SK-N-SH (cell line): ENCODE measurements at regions of chr6 and their contacts with region 1.

Region 1: DNA sequence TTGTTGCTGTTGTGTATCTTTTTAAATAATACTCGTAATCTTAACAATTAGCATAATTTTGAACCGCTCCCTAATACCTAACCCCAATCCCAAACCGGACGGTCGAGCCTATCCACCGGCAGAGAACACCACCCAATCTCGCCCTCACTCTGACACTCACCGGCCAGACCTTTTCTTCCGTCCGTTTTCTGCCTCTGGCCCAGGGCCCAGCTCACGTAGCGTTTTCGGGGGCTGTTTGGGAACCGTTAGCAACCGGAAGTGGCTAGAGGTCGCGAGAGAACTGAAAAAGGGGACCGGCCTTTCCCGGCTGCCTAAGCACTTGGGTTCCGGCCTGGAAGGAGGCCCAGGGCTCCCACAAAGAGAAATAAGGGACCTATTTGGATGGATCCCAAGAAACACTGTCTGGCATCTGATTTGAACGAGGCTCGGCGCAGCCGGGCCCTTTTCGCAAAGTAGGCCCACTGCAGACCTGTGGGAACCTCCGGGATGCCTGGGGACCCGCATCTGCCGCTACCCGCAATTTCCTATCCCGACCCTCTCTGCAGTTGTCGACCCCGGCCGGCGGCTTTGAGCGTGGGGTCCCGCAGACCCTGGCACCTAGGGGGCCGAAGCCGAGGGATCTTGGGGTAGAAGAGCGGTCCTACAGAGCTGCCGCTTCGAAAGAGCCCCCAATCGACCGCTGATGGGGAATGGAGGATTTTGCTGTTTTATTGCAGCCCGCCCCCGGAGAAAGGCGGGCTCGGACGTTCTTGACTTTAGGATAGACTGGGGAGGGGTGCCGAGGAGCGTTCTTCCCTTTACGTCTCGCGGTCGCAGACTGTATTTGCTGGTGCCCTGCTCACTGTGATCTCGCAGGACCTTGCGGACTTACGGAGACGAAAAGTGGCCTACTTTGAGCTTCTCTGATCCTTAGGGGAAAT is 4.8 kb upstream of the ZKSCAN8 start:
- DNase-seq: peak; percentile 79
- H3K4me3 ChIP-seq: peak overlapping the region; percentile 86 to 90
- H3K27ac ChIP-seq: peak overlapping the region; percentile 88 to 97
- H3K4me1 ChIP-seq: peaks cover 0 to 17% of the 10 kb centered on the region in 2 experiments; a peak in 3 of 4 replicates
- H3K27me3 ChIP-seq: no peaks in the 10 kb centered on the region
- CTCF ChIP-seq: no peak
- EP300 ChIP-seq: peak in 1 of 2 experiments; percentile 50; a peak in 1 of 4 replicates
- RAD21 ChIP-seq: no peak

Region 2: DNA sequence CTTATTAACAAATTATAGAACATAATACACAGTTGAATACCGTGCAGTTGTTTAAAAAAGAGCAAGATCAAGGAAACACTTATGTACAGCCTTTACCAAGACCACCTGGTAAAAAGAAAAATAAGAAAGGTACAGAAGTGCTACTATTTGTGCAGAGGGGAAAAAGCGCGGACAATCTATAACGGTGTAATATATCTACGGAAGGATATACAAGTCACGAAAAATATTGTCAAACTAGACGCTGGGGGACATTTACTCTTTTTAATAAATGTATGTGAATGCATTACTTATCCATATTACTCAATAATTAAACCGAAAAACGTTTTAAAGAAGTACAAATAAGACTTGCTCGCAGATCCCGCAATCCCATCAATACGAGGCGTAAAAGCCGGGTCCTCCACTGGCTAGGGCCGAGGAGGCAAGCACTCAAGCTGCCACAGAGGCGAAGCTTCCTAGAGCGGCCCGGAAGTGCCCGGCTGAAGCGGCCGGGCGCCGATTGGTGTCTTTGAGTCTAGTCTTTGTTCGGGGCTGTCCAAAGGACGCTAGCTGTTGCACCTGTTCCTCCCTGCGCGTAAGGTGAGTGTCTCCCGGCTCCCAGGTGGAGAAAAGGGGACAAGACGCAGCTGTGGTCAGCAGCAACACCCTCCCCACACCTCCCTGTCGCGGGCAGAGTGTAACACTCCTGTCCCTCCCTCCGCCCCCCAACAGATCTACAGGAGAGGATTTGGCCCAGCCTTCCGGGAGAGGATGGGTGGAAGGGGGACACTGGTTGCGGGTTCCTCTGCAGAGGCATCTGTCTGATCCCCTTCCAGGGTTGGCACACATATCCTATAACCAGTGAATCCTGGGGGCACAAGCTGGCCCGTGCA is 12.5 kb before region 1 on chr6 and contains the start of gene ZSCAN16:
- CTCF ChIA-PET with region 1: interaction called, 11 read pairs
- POLR2A ChIA-PET with region 1: interaction called, 23 read pairs
- DNase-seq: peak; percentile 81
- H3K4me3 ChIP-seq: peak within 1 kb of the TSS; percentile 83 to 91
- H3K27ac ChIP-seq: peak within 1 kb of the TSS; percentile 36 to 78; a peak in 3 of 4 replicates
- H3K4me1 ChIP-seq: peaks cover 6 to 10% of the 10 kb centered on the region in 2 experiments; a peak in 2 of 4 replicates
- H3K27me3 ChIP-seq: no peaks in the 10 kb centered on the region
- CTCF ChIP-seq: no peak
- EP300 ChIP-seq: no peak
- RAD21 ChIP-seq: no peak
- polyA plus RNA-seq, gene ZSCAN16: 3.7 and 6.2 TPM in 2 replicates

Region 3: DNA sequence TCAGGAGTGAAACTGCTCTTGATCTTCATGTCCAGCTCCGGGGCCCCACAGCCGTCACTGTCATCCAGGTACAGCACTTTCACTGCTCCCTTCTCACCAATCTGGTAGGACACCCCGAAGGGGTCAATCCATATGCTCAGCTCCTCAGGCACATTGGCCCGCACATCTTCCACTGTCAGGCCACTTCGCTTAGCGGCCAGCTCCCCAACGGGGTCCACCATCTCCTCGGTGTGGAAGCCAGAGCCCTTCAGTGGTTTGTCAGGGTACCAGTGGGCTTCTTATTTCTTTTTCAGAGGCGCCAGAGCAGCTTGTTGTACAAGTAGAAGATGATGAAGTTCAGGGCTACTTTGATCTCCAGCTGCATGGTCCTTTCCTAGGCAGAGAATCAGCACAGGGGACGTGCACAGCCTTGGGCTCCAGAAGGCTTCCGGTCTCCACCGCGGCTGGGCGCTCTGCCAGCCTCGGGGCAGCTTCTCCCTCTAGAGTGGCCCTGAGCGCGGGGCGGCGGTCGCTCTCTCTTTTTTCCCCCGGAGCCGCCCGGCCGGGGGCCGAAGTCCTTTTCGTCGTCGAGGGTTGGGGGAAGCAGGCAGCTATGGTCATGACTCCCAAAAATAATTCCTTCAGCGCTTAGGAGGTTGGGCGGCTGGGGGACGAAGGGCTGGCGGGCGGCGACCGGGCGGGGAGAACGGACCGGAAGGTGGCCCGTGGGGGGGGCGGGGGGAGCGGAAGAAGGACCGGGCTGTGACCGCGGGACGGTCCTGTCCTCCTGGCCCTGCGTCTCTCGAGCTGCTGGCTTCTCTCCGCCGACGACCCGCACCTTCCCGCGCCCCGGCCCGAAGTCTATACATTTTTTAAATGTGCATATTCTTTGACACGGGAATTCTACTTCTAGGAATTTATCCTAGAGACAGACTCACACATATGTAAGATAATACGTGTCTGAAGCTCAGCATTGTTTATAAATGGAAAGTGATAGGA is 81.7 kb after region 1 on chr6:
- CTCF ChIA-PET with region 1: no interaction called
- POLR2A ChIA-PET with region 1: interaction called, 13 read pairs
- DNase-seq: peak; percentile 93
- H3K4me3 ChIP-seq: peak overlapping the region; percentile 55 to 67
- H3K27ac ChIP-seq: peak overlapping the region in 1 of 2 experiments; percentile 81; a peak in 2 of 4 replicates
- H3K4me1 ChIP-seq: peaks cover 0 to 11% of the 10 kb centered on the region in 2 experiments; a peak in 2 of 4 replicates
- H3K27me3 ChIP-seq: no peaks in the 10 kb centered on the region; the same call in 1 of the 2 replicates
- CTCF ChIP-seq: no peak
- EP300 ChIP-seq: no peak
- RAD21 ChIP-seq: no peak

Region 4: DNA sequence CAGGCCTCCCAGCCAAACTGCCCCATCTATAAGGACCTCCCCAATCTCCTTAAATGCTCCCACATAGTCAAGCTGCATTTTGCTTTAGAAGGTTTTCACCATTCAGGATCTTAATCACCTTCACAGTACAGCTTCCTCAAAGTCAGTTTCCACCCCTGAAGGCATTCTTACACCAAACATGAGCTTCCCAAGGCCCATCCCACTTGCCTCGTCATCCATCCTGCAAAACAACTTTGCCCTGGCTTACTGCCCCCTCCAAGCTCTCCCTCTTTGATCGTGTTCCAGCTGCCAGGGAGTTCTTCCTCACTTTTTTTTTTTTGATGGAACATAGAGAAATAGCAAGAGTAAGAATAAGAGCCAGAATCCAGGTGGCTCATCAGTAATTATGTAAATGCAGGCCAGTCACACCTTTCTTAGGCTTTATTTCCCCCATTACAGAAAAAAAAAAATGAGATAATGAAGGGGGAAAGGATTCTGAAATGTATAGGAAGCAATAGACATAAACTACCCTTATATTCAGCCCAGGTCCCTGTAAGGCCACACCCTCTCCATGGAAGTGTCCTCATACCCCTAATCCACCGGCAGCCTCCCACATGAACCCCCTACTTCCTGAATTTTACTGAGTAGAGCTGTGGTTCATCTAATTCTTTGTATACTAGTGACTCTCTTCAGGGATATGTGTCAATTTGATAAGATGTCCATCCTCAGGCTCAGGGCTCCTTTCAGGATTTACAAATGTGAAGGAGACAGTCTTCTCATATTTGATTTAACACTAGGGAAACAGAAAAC is 774.3 kb after region 1 on chr6:
- CTCF ChIA-PET with region 1: no interaction called
- POLR2A ChIA-PET with region 1: no interaction called
- DNase-seq: no peak
- H3K4me3 ChIP-seq: no peak overlapping the region
- H3K27ac ChIP-seq: no peak overlapping the region
- H3K4me1 ChIP-seq: no peaks in the 10 kb centered on the region
- H3K27me3 ChIP-seq: no peaks in the 10 kb centered on the region
- CTCF ChIP-seq: no peak
- EP300 ChIP-seq: no peak
- RAD21 ChIP-seq: no peak